Esophagus muscularis mucosa (tissue), 4 donors: ENCODE measurements at regions of chr12 and their contacts with region 1.

Region 1: DNA sequence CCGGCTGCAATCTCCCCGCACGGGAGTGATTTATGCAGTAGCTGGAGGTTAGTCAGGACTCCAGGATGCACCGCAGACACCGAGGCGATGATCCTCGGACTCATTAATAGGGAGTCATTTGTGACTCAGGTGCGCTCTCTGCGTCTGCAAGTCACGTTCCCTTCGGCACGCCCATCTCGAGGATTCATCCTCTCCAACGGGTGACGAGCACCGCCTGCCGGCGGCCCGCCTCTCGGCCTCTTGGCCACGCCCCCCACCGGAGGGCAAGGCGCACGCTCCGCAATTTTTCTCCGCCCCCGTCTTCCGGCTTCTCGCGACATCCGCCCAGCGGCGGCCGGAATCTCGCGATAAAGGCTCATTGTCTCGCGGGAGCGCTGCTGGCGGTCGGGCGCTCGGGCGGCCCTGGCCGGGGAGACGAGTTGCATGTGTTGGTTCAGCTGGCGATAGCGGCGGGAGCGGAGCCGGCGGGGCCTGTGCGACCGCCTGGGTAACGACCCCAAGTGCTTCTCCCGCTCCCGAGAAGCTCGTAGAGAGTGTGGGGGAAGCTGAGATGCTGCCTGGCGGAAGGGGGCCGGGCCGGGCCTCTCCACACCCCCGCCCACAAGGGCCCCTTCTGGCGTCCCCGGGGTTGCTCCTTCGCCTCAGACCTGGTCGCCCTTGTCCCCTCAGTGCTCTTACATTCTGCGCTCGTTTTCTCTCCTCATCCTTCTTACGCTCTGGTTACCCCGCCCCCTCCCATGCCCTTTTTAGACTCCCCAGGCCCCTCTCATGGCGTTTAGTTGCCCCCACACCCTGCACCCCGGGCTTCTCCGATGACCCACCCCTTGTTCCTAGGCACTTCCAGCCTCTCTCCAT is at the start of gene DENR:
- DNase-seq: peak; percentile 99
- H3K4me3 ChIP-seq: peak within 1 kb of the TSS; percentile 71 to 91 (median 89)
- H3K27ac ChIP-seq: peak within 1 kb of the TSS; percentile 78 to 86 (median 84)
- H3K4me1 ChIP-seq: peaks cover 15 to 33% (median 28%) of the 10 kb centered on the region in 4 donors
- H3K27me3 ChIP-seq: no peaks in the 10 kb centered on the region
- CTCF ChIP-seq: peak; percentile 80 to 97 (median 92)
- EP300 ChIP-seq: no peak
- POLR2A ChIP-seq: peak; percentile 43
- total RNA-seq, gene DENR: 20.7 to 32.1 (median 23.7) TPM

Region 2: GRCh38 chr12:122225683-122226407 is 526.8 kb before region 1 on chr12 and contains the start of gene DIABLO:
- intact Hi-C with region 1: no loop called
- DNase-seq: peak; percentile 100
- H3K4me3 ChIP-seq: peak within 1 kb of the TSS; percentile 70 to 97 (median 92)
- H3K27ac ChIP-seq: peak within 1 kb of the TSS; percentile 93 to 97 (median 96)
- H3K4me1 ChIP-seq: peaks cover 28 to 36% (median 36%) of the 10 kb centered on the region in 4 donors
- H3K27me3 ChIP-seq: no peaks in the 10 kb centered on the region
- CTCF ChIP-seq: no peak
- EP300 ChIP-seq: no peak
- POLR2A ChIP-seq: peak; percentile 93
- total RNA-seq, gene DIABLO: 30.8 to 43.6 (median 39.3) TPM

Region 3: GRCh38 chr12:122526683-122527477 is 225.8 kb before region 1 on chr12 and contains the starts of genes KNTC1 and RSRC2:
- intact Hi-C with region 1: loop called (anchors 10 kb)
- DNase-seq: peak; percentile 100
- H3K4me3 ChIP-seq: peak within 1 kb of the TSS; percentile 70 to 87 (median 79)
- H3K27ac ChIP-seq: peak within 1 kb of the TSS; percentile 94 to 98 (median 96)
- H3K4me1 ChIP-seq: peaks cover 40 to 47% (median 46%) of the 10 kb centered on the region in 4 donors
- H3K27me3 ChIP-seq: no peaks in the 10 kb centered on the region
- CTCF ChIP-seq: no peak
- EP300 ChIP-seq: no peak
- POLR2A ChIP-seq: peak; percentile 93
- total RNA-seq, gene KNTC1: 4.3 to 11.2 (median 6.3) TPM
- total RNA-seq, gene RSRC2: 46.5 to 68.9 (median 48.6) TPM

Region 4: GRCh38 chr12:122635471-122635870 is 117.2 kb before region 1 on chr12:
- intact Hi-C with region 1: loop called (anchors 10 kb)
- DNase-seq: no peak
- H3K4me3 ChIP-seq: no peak overlapping the region
- H3K27ac ChIP-seq: no peak overlapping the region
- H3K4me1 ChIP-seq: no peaks in the 10 kb centered on the region
- H3K27me3 ChIP-seq: no peaks in the 10 kb centered on the region
- CTCF ChIP-seq: no peak
- EP300 ChIP-seq: no peak
- POLR2A ChIP-seq: no peak

Region 5: GRCh38 chr12:122646517-122647217 is 106.0 kb before region 1 on chr12:
- intact Hi-C with region 1: no loop called
- DNase-seq: no peak
- H3K4me3 ChIP-seq: no peak overlapping the region
- H3K27ac ChIP-seq: no peak overlapping the region
- H3K4me1 ChIP-seq: no peaks in the 10 kb centered on the region
- H3K27me3 ChIP-seq: no peaks in the 10 kb centered on the region
- CTCF ChIP-seq: no peak
- EP300 ChIP-seq: no peak
- POLR2A ChIP-seq: no peak

Region 6: DNA sequence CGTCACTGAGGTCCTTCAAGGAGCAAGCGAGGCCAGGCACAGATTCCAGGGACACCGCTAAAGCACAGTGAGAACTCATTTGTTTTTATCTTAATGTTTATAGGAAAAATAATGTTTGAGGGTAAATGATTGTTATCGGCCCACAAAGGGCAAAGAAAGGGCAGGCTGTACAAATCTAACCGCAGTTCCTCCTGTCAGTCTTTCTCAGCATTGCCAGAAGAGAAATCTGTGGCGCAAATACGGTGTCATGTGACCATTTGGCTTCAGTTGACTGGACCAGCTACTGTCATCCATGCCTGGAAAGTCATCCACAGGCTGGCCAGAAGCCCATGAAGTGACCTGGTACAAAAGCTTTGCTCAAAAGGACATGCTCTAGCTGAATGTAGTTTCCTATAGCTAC is 93.2 kb before region 1 on chr12:
- intact Hi-C with region 1: no loop called
- DNase-seq: no peak
- H3K4me3 ChIP-seq: no peak overlapping the region
- H3K27ac ChIP-seq: no peak overlapping the region
- H3K4me1 ChIP-seq: no peaks in the 10 kb centered on the region
- H3K27me3 ChIP-seq: no peaks in the 10 kb centered on the region
- CTCF ChIP-seq: no peak
- EP300 ChIP-seq: no peak
- POLR2A ChIP-seq: no peak

Region 7: DNA sequence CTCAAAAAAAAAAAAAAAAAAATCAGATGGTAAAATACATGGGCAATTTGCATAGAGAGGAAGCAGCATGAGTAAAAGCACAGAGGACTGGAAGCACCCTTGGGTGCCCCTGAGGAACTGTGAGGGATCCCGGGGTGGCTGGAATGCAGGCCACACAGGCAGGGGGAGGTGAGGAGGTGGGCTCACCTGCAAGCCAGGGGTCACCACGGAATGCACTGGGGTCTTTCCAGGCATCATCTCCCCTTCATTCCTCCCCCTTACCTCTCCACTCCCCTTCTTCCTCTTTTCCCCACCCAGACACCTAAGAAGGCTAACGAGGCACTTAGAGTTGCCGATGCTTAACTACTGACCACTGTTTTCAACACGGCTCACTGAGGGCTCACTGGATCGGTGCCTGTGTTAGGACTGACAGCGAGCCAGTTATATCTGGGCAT is 68.2 kb after region 1 on chr12:
- intact Hi-C with region 1: loop called (anchors 2 kb)
- DNase-seq: no peak
- H3K4me3 ChIP-seq: no peak overlapping the region
- H3K27ac ChIP-seq: no peak overlapping the region
- H3K4me1 ChIP-seq: peaks cover 0 to 4% (median 2%) of the 10 kb centered on the region in 4 donors
- H3K27me3 ChIP-seq: no peaks in the 10 kb centered on the region
- CTCF ChIP-seq: no peak
- EP300 ChIP-seq: no peak
- POLR2A ChIP-seq: no peak